ENCODE measurements at regions of chr3 and their contacts with region 1.

Region 1: GRCh38 chr3:40317061-40317855 is 7.8 kb downstream of the EIF1B start:
- DNase-seq: peak; percentile 60
- ATAC-seq: peak; percentile 88
- H3K4me3 ChIP-seq: no peak overlapping the region
- H3K27ac ChIP-seq: no peak overlapping the region
- H3K4me1 ChIP-seq: no peaks in the 10 kb centered on the region
- H3K27me3 ChIP-seq: no peaks in the 10 kb centered on the region
- CTCF ChIP-seq: peak; percentile 65 to 84 (median 82); a peak in 5 of 6 replicates
- POLR2A ChIP-seq: no peak
- RAD21 ChIP-seq: peak; percentile 85

Region 2: GRCh38 chr3:39541917-39542329 is 775.3 kb before region 1 on chr3:
- CTCF ChIA-PET with region 1: no interaction called
- POLR2A ChIA-PET with region 1: no interaction called
- RAD21 ChIA-PET with region 1: no interaction called
- intact Hi-C with region 1: loop called (anchors 10 kb)
- DNase-seq: peak; percentile 13
- ATAC-seq: peak; percentile 66
- H3K4me3 ChIP-seq: no peak overlapping the region
- H3K27ac ChIP-seq: no peak overlapping the region
- H3K4me1 ChIP-seq: no peaks in the 10 kb centered on the region
- H3K27me3 ChIP-seq: no peaks in the 10 kb centered on the region
- CTCF ChIP-seq: peak; percentile 55 to 71 (median 62); a peak in 4 of 6 replicates
- POLR2A ChIP-seq: no peak
- RAD21 ChIP-seq: peak; percentile 78

Region 3: GRCh38 chr3:39707314-39707909 is 609.8 kb before region 1 on chr3:
- CTCF ChIA-PET with region 1: no interaction called
- POLR2A ChIA-PET with region 1: no interaction called
- RAD21 ChIA-PET with region 1: no interaction called
- intact Hi-C with region 1: loop called (anchors 10 kb)
- DNase-seq: peak; percentile 29
- ATAC-seq: peak; percentile 70
- H3K4me3 ChIP-seq: no peak overlapping the region
- H3K27ac ChIP-seq: no peak overlapping the region
- H3K4me1 ChIP-seq: peaks cover 0 to 6% of the 10 kb centered on the region in 2 experiments; a peak in 1 of 4 replicates
- H3K27me3 ChIP-seq: no peaks in the 10 kb centered on the region
- CTCF ChIP-seq: peak; percentile 33 to 73 (median 69); a peak in 5 of 6 replicates
- POLR2A ChIP-seq: no peak
- RAD21 ChIP-seq: peak; percentile 47; the same call in 1 of the 2 replicates

Region 4: GRCh38 chr3:40191850-40192448 is 125.3 kb before region 1 on chr3:
- CTCF ChIA-PET with region 1: interaction called, 49 read pairs
- POLR2A ChIA-PET with region 1: interaction called, 4 read pairs
- RAD21 ChIA-PET with region 1: interaction called in 1 of 2 experiments, 9 read pairs
- intact Hi-C with region 1: loop called (anchors 1 kb)
- DNase-seq: peak; percentile 40
- ATAC-seq: peak; percentile 91
- H3K4me3 ChIP-seq: no peak overlapping the region
- H3K27ac ChIP-seq: no peak overlapping the region
- H3K4me1 ChIP-seq: peaks cover 0 to 5% of the 10 kb centered on the region in 2 experiments; a peak in 1 of 4 replicates
- H3K27me3 ChIP-seq: 0 out of 2 replicates have a peak, but pooled peaks cover 7% of the 10 kb centered on the region
- CTCF ChIP-seq: peak; percentile 75 to 91 (median 76); a peak in 5 of 6 replicates
- POLR2A ChIP-seq: no peak
- RAD21 ChIP-seq: peak; percentile 82